ENCODE measurements at regions of chr16 and their contacts with region 1.

Region 1: DNA sequence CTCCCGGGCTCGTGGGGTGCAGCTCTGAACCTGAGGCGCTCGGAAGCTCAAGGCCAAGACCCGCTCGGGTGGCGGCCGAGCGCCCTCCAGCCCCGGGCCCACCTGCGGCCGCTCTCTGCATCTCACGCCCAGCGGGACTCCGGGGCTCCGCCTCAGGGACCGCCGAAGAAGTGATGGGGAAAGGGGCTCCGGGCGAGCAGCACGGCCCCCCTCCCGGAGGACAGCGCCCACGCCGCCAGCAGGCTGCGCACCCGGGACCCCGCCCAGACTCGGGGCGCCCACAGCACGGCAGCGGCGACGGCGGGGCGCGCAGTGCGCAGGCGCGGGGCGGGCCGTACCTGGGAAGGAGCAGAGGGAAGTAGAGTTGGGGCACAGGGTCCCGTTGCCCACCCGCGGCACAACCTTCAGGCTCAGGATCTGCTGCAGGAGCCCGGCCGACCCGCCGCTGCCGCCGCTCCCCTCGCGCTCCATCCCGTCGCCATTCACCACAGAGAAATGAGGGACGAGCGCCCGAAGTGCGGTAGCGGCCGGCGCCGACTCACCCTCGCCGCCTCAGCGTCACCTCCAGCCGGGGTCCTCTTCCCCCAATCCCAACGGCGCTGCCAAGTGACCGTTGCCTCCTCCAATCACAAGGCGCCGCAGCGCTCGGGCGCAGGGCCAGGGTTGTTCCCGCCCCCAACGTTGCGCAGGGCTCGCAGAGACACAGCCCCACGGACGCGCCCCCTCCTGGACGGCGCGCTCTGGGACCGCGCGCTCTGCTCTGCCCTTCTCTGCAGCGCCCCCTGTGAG is at the start of gene TMEM170A:
- DNase-seq: peak; percentile 97
- H3K4me3 ChIP-seq: peak within 1 kb of the TSS; percentile 77
- CTCF ChIP-seq: peak; percentile 100

Region 2: GRCh38 chr16:75420987-75421819 is 43.1 kb before region 1 on chr16:
- in situ Hi-C with region 1: no loop called
- DNase-seq: no peak
- H3K4me3 ChIP-seq: no peak overlapping the region
- CTCF ChIP-seq: no peak

Region 3: DNA sequence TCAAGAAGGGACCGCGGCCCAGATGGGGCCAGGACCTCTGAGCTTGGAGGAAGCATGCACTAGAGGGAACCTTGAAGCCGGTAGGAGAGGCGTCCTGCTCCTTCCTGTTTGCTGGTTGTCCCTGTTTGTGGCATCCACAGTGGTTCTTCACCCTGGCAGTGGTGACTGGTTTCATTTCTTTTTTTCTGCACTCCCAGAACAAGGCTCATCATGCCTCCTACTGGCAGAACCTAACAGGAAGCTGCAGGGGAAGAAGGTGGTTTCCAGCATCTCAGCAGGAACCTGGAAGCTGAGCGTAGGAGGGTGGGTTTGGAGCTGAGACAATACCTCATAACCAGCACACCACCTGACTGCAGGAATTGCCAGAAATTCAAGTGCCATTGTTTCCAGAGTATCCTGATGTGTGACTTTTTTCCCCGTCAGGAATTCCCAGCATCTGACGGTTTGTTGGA is 85.9 kb after region 1 on chr16:
- in situ Hi-C with region 1: no loop called
- DNase-seq: peak; percentile 83
- H3K4me3 ChIP-seq: peak overlapping the region; percentile 7
- CTCF ChIP-seq: peak; percentile 79

Region 4: DNA sequence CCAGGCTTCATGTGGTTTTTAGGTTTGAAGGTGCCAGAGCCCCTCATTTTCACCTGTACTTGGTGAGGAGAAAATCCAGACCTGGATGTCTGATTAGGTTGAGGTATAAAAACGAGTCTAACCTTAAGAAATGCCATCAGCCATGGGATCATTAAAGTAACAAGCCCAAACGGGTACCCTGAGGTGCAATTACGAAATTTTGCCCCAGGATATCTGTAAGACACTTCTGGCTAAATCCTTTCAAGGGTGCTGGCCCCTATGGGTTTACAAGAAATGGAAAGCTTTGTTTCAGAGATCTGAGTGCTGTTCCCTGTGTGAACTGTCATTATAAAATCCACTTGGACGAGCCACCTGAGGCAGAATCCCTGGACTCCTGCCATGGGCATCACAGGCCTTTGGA is 138.9 kb after region 1 on chr16:
- in situ Hi-C with region 1: no loop called
- DNase-seq: no peak
- H3K4me3 ChIP-seq: no peak overlapping the region
- CTCF ChIP-seq: no peak

Region 5: DNA sequence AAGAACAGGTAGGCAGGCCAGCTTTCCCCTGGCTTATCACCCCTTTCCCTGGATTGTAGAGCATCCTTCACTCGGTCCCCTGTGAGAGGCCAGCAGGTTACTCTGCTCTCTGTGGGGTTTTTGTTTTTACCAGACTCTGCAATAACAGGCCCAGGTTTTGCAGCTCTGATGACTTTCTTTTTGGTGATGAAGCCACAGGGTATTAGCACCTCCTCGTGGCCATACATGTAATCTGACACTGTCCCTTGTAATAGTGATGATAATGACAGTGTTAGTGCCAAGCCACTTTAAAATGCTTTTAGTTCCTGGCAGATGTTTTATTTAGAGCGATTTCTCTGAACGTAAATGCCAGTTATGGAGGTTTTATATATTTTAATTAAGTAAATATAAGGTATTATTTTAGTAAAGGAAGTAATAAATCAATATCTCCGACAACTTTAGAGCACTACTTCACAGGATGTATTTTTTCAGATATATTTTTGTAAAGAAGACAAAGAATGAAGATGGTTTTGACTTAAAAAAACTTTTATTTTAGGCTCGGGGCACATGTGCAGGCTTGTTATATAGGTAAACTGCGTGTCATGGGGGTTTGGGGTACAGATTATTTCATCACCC is 299.9 kb after region 1 on chr16:
- in situ Hi-C with region 1: loop called (anchors 25 kb)
- DNase-seq: peak; percentile 69
- H3K4me3 ChIP-seq: no peak overlapping the region
- CTCF ChIP-seq: peak; percentile 85